Heart left ventricle (tissue), 16 donors: ENCODE measurements at regions of chr17 and their contacts with region 1.

Region 1: GRCh38 chr17:45385331-45385997 is 47.2 kb downstream of the ARHGAP27 start:
- DNase-seq: peak; percentile 88 to 94 (median 89)
- ATAC-seq: peak; percentile 86 to 95 (median 90)
- H3K4me3 ChIP-seq: no peak overlapping the region
- H3K27ac ChIP-seq: peak overlapping the region in 1 of 12 donors; percentile 63
- H3K4me1 ChIP-seq: peaks cover 0 to 31% (median 14%) of the 10 kb centered on the region in 12 donors
- H3K27me3 ChIP-seq: peaks cover 0 to 3% (median 0%) of the 10 kb centered on the region in 9 donors
- CTCF ChIP-seq: peak; percentile 91 to 100 (median 98)
- POLR2A ChIP-seq: no peak

Region 2: GRCh38 chr17:45184144-45184543 is 201.3 kb before region 1 on chr17:
- intact Hi-C with region 1: no loop called
- DNase-seq: no peak
- ATAC-seq: no peak
- H3K4me3 ChIP-seq: no peak overlapping the region
- H3K27ac ChIP-seq: no peak overlapping the region
- H3K4me1 ChIP-seq: no peaks in the 10 kb centered on the region
- H3K27me3 ChIP-seq: no peaks in the 10 kb centered on the region
- CTCF ChIP-seq: no peak
- POLR2A ChIP-seq: no peak

Region 3: GRCh38 chr17:45247429-45248131 is 137.9 kb before region 1 on chr17:
- intact Hi-C with region 1: loop called in 1 of 10 experiments (anchors 1 kb)
- DNase-seq: peak; percentile 84 to 91 (median 90)
- ATAC-seq: peak; percentile 79 to 91 (median 86)
- H3K4me3 ChIP-seq: peak overlapping the region; percentile 24 to 63 (median 54)
- H3K27ac ChIP-seq: peak overlapping the region in 10 of 12 donors; percentile 24 to 84 (median 46)
- H3K4me1 ChIP-seq: peaks cover 0 to 35% (median 18%) of the 10 kb centered on the region in 12 donors
- H3K27me3 ChIP-seq: no peaks in the 10 kb centered on the region
- CTCF ChIP-seq: no peak
- POLR2A ChIP-seq: peak in 1 of 2 donors; percentile 17

Region 4: GRCh38 chr17:45277216-45277849 is 108.1 kb before region 1 on chr17:
- intact Hi-C with region 1: loop called (anchors 1 to 2 kb)
- DNase-seq: peak; percentile 90 to 97 (median 93)
- ATAC-seq: peak; percentile 62 to 76 (median 67)
- H3K4me3 ChIP-seq: peak overlapping the region in 1 of 12 donors; percentile 33
- H3K27ac ChIP-seq: peak overlapping the region; percentile 28 to 89 (median 78)
- H3K4me1 ChIP-seq: peaks cover 0 to 43% (median 26%) of the 10 kb centered on the region in 12 donors
- H3K27me3 ChIP-seq: no peaks in the 10 kb centered on the region
- CTCF ChIP-seq: peak; percentile 72 to 87 (median 82)
- POLR2A ChIP-seq: peak in 1 of 2 donors; percentile 25

Region 5: GRCh38 chr17:45451141-45451540 is 65.7 kb after region 1 on chr17:
- intact Hi-C with region 1: no loop called
- DNase-seq: no peak
- ATAC-seq: no peak
- H3K4me3 ChIP-seq: no peak overlapping the region
- H3K27ac ChIP-seq: no peak overlapping the region
- H3K4me1 ChIP-seq: peaks cover 0 to 15% (median 3%) of the 10 kb centered on the region in 12 donors
- H3K27me3 ChIP-seq: no peaks in the 10 kb centered on the region
- CTCF ChIP-seq: no peak
- POLR2A ChIP-seq: no peak